ENCODE measurements at regions of chr6 and their contacts with region 1.

Region 1: DNA sequence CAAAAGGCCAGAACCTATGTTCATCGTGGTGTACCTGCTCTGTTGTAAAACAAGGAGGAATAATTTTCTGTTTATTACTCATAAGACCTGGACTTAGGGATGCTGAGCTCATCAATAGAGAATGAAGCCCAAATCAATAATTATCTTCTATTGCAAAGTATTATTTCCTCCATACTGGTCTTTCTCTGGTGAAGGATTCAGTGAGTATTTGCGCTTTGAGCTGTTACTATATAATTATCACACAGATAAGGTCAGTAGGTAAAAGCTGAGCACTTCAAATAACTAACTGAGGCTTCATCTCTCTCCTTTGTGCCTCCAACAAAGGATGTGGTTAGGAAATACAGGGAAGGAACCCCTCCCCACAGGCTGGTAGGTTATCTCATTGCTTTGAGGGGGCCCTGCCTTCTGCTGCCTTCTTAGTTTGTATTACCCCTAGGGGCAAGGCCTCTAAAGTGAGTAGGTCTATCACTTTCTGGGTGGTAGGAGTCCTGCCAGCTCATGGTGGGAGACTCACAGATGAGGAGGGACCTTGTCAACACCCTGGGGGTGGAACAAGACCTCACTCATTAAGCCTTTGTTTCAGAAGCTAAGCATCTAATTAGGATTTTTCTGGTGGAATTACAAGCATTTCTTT is 34.5 kb downstream of the EDN1 start:
- DNase-seq: peak; percentile 31
- ATAC-seq: peak; percentile 39
- H3K4me3 ChIP-seq: no peak overlapping the region; a peak in 1 of 6 replicates
- H3K27ac ChIP-seq: peak overlapping the region; percentile 35
- H3K4me1 ChIP-seq: peaks cover 58% of the 10 kb centered on the region
- H3K27me3 ChIP-seq: no peaks in the 10 kb centered on the region
- CTCF ChIP-seq: no peak
- EP300 ChIP-seq: no peak
- POLR2A ChIP-seq: no peak
- RAD21 ChIP-seq: no peak

Region 2: GRCh38 chr6:11172501-11173332 is 1151.9 kb before region 1 on chr6:
- CTCF ChIA-PET with region 1: no interaction called
- POLR2A ChIA-PET with region 1: no interaction called
- in situ Hi-C with region 1: no loop called
- intact Hi-C with region 1: no loop called
- DNase-seq: peak; percentile 66
- ATAC-seq: peak; percentile 86
- H3K4me3 ChIP-seq: peak overlapping the region in 1 of 3 experiments; percentile 47; a peak in 2 of 6 replicates
- H3K27ac ChIP-seq: no peak overlapping the region
- H3K4me1 ChIP-seq: peaks cover 36% of the 10 kb centered on the region
- H3K27me3 ChIP-seq: no peaks in the 10 kb centered on the region
- CTCF ChIP-seq: peak; percentile 96
- EP300 ChIP-seq: no peak
- POLR2A ChIP-seq: no peak
- RAD21 ChIP-seq: peak; percentile 83

Region 3: DNA sequence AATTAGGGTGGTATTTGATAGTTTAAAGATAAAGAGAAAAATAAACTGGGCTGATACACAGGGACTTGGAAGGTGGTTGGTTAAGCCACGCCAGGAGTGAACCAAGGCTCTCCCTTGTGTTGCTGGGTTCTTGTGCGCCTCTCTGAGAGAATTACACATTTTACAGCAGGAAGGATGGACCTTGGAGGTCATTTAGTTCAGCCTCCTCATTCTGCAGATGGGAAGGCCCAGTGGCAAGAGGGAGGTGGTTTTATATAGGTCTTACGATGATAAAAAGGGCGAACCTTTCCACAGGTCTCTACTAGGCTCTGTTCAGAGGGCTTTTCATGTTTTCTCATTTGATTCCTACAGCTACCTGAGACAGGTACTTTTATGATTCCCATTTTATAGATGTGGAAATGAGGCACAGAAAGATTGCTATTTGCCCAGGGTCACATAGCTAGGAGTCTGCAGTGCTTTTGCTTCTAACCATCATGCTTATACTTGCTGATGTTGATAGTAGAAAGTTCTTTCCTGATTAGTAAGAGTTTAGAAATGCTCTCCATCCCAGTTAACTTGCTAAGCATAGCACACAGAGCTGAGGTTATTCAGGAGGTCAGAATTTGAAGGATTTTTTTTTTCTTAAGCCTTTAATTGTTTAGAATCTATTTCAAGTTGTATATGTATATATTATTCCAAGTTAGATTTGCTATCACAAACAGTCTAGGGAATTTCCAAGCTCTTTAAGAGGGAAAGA is 299.8 kb before region 1 on chr6:
- CTCF ChIA-PET with region 1: no interaction called
- POLR2A ChIA-PET with region 1: no interaction called
- in situ Hi-C with region 1: no loop called
- intact Hi-C with region 1: no loop called
- DNase-seq: no peak
- ATAC-seq: no peak
- H3K4me3 ChIP-seq: no peak overlapping the region
- H3K27ac ChIP-seq: no peak overlapping the region
- H3K4me1 ChIP-seq: peaks cover 8% of the 10 kb centered on the region; the same call in 1 of the 2 replicates
- H3K27me3 ChIP-seq: no peaks in the 10 kb centered on the region
- CTCF ChIP-seq: no peak
- EP300 ChIP-seq: no peak
- POLR2A ChIP-seq: no peak
- RAD21 ChIP-seq: no peak

Region 4: GRCh38 chr6:12119085-12119588 is 205.5 kb before region 1 on chr6:
- CTCF ChIA-PET with region 1: no interaction called
- POLR2A ChIA-PET with region 1: no interaction called
- in situ Hi-C with region 1: no loop called
- intact Hi-C with region 1: no loop called
- DNase-seq: no peak
- ATAC-seq: no peak
- H3K4me3 ChIP-seq: no peak overlapping the region
- H3K27ac ChIP-seq: no peak overlapping the region
- H3K4me1 ChIP-seq: no peaks in the 10 kb centered on the region
- H3K27me3 ChIP-seq: no peaks in the 10 kb centered on the region
- CTCF ChIP-seq: no peak
- EP300 ChIP-seq: no peak
- POLR2A ChIP-seq: no peak
- RAD21 ChIP-seq: no peak

Region 5: DNA sequence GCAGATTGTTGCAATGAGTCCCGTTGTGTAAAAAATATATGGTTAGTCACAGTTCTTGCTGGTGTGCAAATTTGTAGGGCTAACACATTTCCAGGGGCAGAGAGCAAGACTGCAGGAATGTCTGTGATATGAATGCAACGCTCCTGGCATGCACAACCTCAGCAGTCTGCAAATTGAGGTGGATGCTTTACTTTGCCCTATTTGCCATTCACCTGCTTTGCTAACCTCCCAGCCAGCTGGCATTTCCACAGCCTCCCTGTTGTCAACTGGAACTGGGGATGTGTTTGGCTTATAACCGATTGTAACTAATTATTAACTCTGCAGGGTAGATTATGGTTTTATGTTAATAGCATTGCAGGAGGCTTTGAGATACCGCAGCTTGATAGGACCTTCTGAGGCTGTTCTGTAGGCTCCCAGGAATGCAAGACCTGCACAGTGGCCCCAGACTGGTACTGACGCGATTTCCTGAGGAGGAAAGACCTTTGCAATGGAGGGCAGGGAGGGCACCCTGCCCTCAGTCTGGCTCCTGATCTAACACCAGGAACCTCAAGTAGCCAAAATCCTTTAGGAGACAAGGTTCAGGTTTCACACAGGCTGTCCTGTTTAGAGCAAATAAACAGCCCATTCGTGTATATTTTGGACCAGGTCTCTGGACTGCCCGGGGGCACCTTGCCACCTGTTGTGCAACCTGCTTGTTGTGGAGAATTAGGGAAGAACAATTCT is 19.0 kb after region 1 on chr6:
- CTCF ChIA-PET with region 1: no interaction called
- POLR2A ChIA-PET with region 1: interaction called, 9 read pairs
- in situ Hi-C with region 1: no loop called
- intact Hi-C with region 1: loop called (anchors 1 kb)
- DNase-seq: peak; percentile 90
- ATAC-seq: peak; percentile 79
- H3K4me3 ChIP-seq: peak overlapping the region in 1 of 3 experiments; percentile 23; a peak in 1 of 6 replicates
- H3K27ac ChIP-seq: peak overlapping the region; percentile 41
- H3K4me1 ChIP-seq: peaks cover 81% of the 10 kb centered on the region
- H3K27me3 ChIP-seq: no peaks in the 10 kb centered on the region
- CTCF ChIP-seq: no peak
- EP300 ChIP-seq: no peak; a peak in 1 of 4 replicates
- POLR2A ChIP-seq: no peak
- RAD21 ChIP-seq: no peak

Region 6: GRCh38 chr6:12348530-12349511 is 24.2 kb after region 1 on chr6:
- CTCF ChIA-PET with region 1: no interaction called
- POLR2A ChIA-PET with region 1: interaction called, 9 read pairs
- in situ Hi-C with region 1: no loop called
- intact Hi-C with region 1: loop called (anchors 1 kb)
- DNase-seq: peak; percentile 98
- ATAC-seq: peak; percentile 95
- H3K4me3 ChIP-seq: no peak overlapping the region
- H3K27ac ChIP-seq: peak overlapping the region; percentile 15
- H3K4me1 ChIP-seq: peaks cover 43% of the 10 kb centered on the region
- H3K27me3 ChIP-seq: no peaks in the 10 kb centered on the region
- CTCF ChIP-seq: no peak
- EP300 ChIP-seq: peak; percentile 17 to 97; a peak in 2 of 4 replicates
- POLR2A ChIP-seq: no peak
- RAD21 ChIP-seq: no peak

Region 7: GRCh38 chr6:12363651-12364381 is 39.2 kb after region 1 on chr6:
- CTCF ChIA-PET with region 1: no interaction called
- POLR2A ChIA-PET with region 1: interaction called, 15 read pairs
- in situ Hi-C with region 1: no loop called
- intact Hi-C with region 1: no loop called
- DNase-seq: peak; percentile 52
- ATAC-seq: peak; percentile 74
- H3K4me3 ChIP-seq: 0 out of 6 replicates have a peak overlapping the region, but pooled peaks of 1 of the 3 experiments have one; percentile 18
- H3K27ac ChIP-seq: no peak overlapping the region
- H3K4me1 ChIP-seq: peaks cover 36% of the 10 kb centered on the region
- H3K27me3 ChIP-seq: no peaks in the 10 kb centered on the region
- CTCF ChIP-seq: no peak
- EP300 ChIP-seq: 0 out of 4 replicates have a peak, but pooled peaks of 1 of the 2 experiments have one; percentile 19
- POLR2A ChIP-seq: no peak
- RAD21 ChIP-seq: no peak

Measured in HepG2 (cell line).